HepG2 (cell line): ENCODE measurements at regions of chr14 and their contacts with region 1.

Region 1: DNA sequence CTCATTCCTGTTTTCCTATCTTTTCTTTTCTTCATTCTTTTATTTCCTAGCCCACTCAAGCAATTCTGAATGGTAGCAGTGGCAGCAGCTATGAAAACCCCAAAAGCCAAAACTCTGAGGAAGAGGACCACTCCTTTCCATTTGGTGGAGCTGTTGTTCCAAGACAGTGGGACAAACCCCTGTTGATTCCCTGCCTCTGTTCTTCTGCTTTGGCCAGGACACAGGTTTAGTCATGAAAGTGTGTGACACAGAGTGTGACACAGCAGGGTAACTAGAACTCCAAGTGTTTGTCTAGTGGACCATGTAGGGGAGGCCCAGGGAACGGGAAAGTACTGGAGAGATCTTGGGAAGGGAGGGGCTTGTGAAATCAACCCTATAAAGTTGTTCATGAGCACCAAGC is 71.1 kb downstream of the PTCSC3 start:
- DNase-seq: peak; percentile 21
- ATAC-seq: peak; percentile 56
- H3K4me3 ChIP-seq: no peak overlapping the region
- H3K27ac ChIP-seq: no peak overlapping the region
- H3K4me1 ChIP-seq: no peaks in the 10 kb centered on the region
- H3K27me3 ChIP-seq: no peaks in the 10 kb centered on the region
- CTCF ChIP-seq: peak; percentile 57
- EP300 ChIP-seq: no peak
- POLR2A ChIP-seq: no peak
- RAD21 ChIP-seq: no peak

Region 2: DNA sequence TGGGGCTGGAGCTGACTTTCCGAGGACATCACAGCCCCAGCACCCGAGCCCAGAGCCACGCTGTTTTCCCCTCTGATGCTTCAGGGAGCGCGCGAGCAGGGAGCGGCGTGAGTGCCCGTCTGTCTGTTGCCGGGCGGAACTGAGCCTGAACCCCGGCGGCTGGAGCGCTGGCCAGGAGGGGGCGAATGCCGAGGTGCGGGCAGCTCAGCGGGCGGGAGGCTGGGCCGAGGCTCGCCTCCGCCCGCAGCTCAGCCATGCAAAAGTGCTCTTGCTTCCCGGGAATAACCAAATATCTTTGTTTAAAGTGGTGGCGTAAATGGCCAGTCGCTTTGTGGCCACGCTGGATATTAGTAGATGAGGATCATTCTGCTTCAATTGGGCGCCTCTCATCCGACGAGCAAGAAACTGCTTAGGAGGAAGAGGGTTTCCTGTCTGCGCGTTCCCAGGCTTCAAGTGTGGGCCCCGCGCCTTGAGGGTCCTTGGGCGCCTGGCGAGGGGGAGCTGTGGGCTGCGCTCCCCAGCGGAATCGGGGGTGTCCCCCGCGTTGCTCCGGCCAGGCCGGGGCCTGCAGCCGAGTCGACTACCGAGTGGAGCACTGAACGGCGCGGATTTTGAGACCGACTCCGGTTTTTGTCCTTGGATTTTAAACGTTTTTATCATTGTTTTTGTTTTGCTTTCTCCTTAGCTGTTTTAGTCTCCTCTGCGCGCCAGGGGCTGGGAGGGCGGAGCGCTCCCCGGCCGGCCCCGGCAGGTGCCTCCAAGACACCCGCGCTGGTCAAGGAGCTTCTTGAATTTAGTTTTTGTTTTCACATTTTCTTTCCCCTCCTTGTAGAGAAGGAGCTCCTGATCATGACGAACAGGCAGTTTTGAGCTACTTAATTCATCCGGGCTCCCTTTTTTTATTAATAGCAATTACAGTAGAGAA is 415.5 kb after region 1 on chr14:
- CTCF ChIA-PET with region 1: no interaction called
- POLR2A ChIA-PET with region 1: no interaction called
- in situ Hi-C with region 1: no loop called
- intact Hi-C with region 1: loop called (anchors 10 kb)
- DNase-seq: peak; percentile 44
- ATAC-seq: peak; percentile 87
- H3K4me3 ChIP-seq: peak overlapping the region in 2 of 3 experiments; percentile 1 to 20; a peak in 2 of 6 replicates
- H3K27ac ChIP-seq: no peak overlapping the region
- H3K4me1 ChIP-seq: 0 out of 2 replicates have a peak, but pooled peaks cover 15% of the 10 kb centered on the region
- H3K27me3 ChIP-seq: peaks cover 55 to 92% of the 10 kb centered on the region in 2 experiments
- CTCF ChIP-seq: peak; percentile 83
- EP300 ChIP-seq: no peak
- POLR2A ChIP-seq: no peak
- RAD21 ChIP-seq: peak; percentile 60; the same call in 1 of the 2 replicates